ENCODE measurements at regions of chr17 and their contacts with region 1.

Region 1: GRCh38 chr17:82273327-82274133 is at the start of gene CSNK1D:
- DNase-seq: peak; percentile 95
- H3K4me3 ChIP-seq: peak within 1 kb of the TSS; percentile 77 to 99 (median 93)
- H3K27ac ChIP-seq: peak within 1 kb of the TSS; percentile 97 to 100 (median 98)
- H3K4me1 ChIP-seq: peaks cover 0 to 57% (median 55%) of the 10 kb centered on the region in 4 donors
- H3K27me3 ChIP-seq: no peaks in the 10 kb centered on the region
- CTCF ChIP-seq: no peak
- EP300 ChIP-seq: peak in 2 of 4 donors; percentile 53 to 72
- POLR2A ChIP-seq: peak; percentile 88 to 91
- total RNA-seq, gene CSNK1D: 45.1 to 61.2 (median 48.9) TPM

Region 2: GRCh38 chr17:82236142-82236981 is 37.2 kb before region 1 on chr17:
- intact Hi-C with region 1: loop called (anchors 2 kb)
- DNase-seq: peak; percentile 89
- H3K4me3 ChIP-seq: no peak overlapping the region
- H3K27ac ChIP-seq: peak overlapping the region; percentile 62 to 90 (median 86)
- H3K4me1 ChIP-seq: peaks cover 0 to 83% (median 70%) of the 10 kb centered on the region in 4 donors
- H3K27me3 ChIP-seq: no peaks in the 10 kb centered on the region
- CTCF ChIP-seq: peak; percentile 85 to 97 (median 96)
- EP300 ChIP-seq: no peak
- POLR2A ChIP-seq: no peak

Region 3: GRCh38 chr17:82292251-82293154 is 19.0 kb after region 1 on chr17:
- intact Hi-C with region 1: loop called (anchors 2 kb)
- DNase-seq: peak; percentile 99
- H3K4me3 ChIP-seq: peak overlapping the region; percentile 62 to 94 (median 69)
- H3K27ac ChIP-seq: peak overlapping the region; percentile 89 to 99 (median 94)
- H3K4me1 ChIP-seq: peaks cover 0 to 69% (median 49%) of the 10 kb centered on the region in 4 donors
- H3K27me3 ChIP-seq: no peaks in the 10 kb centered on the region
- CTCF ChIP-seq: no peak
- EP300 ChIP-seq: peak in 1 of 4 donors; percentile 53
- POLR2A ChIP-seq: peak; percentile 94 to 98

Region 4: GRCh38 chr17:82302991-82303943 is 29.7 kb after region 1 on chr17:
- intact Hi-C with region 1: no loop called
- DNase-seq: no peak
- H3K4me3 ChIP-seq: no peak overlapping the region
- H3K27ac ChIP-seq: no peak overlapping the region
- H3K4me1 ChIP-seq: peaks cover 0 to 13% (median 13%) of the 10 kb centered on the region in 4 donors
- H3K27me3 ChIP-seq: no peaks in the 10 kb centered on the region
- CTCF ChIP-seq: no peak
- EP300 ChIP-seq: no peak
- POLR2A ChIP-seq: no peak